ENCODE measurements at regions of chr11 and their contacts with region 1.

Region 1: DNA sequence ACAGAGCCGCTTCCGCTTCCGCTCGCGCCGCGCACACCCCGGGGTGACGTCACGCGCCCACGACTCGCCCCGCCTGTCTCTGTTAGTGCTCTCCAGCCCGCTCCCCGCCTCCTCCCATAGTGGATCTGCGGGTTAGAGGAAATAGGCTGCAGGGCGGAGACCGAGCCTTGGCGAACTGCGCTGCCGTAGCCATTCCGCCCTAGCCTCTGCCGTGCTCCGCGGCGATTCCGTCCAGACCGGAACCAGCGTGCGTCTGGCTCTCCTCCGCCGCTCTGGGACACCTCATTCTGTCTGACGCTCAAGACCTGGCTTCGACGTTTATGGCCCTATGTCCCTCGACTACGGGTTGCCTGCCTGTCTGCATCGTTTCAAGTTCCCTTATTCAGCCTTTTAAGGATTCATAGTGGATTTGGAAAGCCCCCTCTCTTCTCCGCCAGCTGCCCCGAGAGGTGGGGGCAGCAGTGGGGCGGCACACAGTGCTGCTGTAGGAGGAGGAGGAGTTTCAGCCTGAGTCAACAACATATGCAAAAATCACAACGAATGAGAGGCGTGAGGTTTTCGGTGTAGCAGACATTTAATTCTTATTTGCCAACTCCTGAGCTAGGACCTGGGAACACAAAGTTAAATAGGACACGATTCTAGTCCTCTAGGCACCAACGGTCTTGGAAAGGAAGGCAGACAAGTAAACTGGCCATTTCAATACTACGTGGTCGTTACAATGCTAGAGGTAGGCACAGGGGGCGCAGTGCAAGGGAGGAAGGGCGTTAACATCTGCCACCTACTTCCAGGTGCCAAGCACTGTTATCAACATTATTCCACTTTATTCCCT is at the start of gene TAF10:
- DNase-seq: peak; percentile 98
- ATAC-seq: peak; percentile 88
- H3K4me3 Mint-ChIP-seq: no peak within 1 kb of the TSS
- H3K27ac Mint-ChIP-seq: peak within 1 kb of the TSS; percentile 92
- H3K4me1 Mint-ChIP-seq: peaks cover 38% of the 10 kb centered on the region
- H3K27me3 Mint-ChIP-seq: no peaks in the 10 kb centered on the region
- CTCF ChIP-seq: peak; percentile 69
- total RNA-seq, gene TAF10: 151 to 160 TPM

Region 2: DNA sequence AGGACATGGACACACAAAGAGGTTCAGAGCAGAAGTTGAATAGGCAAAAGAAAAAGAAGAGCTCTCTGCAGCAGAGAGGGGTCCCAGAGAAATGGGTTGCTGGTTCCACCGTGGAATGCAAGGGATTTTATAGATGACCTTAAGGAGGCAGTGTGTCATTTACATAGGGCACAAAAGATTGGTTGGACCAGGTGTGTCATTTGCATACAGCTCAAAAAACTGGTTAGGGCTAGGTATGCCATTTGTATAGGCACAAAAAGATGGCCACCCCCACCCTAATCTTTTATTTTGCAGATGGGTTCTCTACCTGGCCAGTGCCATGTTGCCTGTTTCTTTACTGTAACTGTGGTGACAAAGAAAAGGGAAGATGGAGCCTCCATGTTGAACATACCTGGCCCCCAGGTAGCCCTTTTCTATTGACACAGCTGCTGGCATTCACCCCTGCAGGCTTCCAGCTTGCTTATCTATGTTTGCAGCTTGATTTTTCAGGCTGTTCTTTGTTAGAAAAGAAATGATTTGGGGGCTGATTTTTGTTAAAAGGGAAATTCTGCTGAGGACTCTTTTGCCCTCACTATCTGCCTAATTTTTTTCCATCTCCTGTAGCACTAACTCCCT is 289.0 kb before region 1 on chr11:
- CTCF ChIA-PET with region 1: no interaction called
- POLR2A ChIA-PET with region 1: no interaction called
- intact Hi-C with region 1: no loop called
- DNase-seq: no peak
- ATAC-seq: no peak
- H3K4me3 Mint-ChIP-seq: no peak overlapping the region
- H3K27ac Mint-ChIP-seq: no peak overlapping the region
- H3K4me1 Mint-ChIP-seq: peaks cover 36% of the 10 kb centered on the region
- H3K27me3 Mint-ChIP-seq: peaks cover 32% of the 10 kb centered on the region
- CTCF ChIP-seq: no peak

Region 3: GRCh38 chr11:6746086-6746618 is 133.7 kb after region 1 on chr11:
- CTCF ChIA-PET with region 1: interaction called, 7 read pairs
- POLR2A ChIA-PET with region 1: interaction called, 3 read pairs
- intact Hi-C with region 1: loop called (anchors 10 kb)
- DNase-seq: peak; percentile 63
- ATAC-seq: peak; percentile 82
- H3K4me3 Mint-ChIP-seq: no peak overlapping the region
- H3K27ac Mint-ChIP-seq: no peak overlapping the region
- H3K4me1 Mint-ChIP-seq: peaks cover 29% of the 10 kb centered on the region
- H3K27me3 Mint-ChIP-seq: no peaks in the 10 kb centered on the region
- CTCF ChIP-seq: no peak

Measured in activated CD8-positive, alpha-beta T cell treated with anti-CD3 and anti-CD28 coated beads for 36 hours (primary cell).